T-cell (primary cell): ENCODE measurements at regions of chr7 and their contacts with region 1.

Region 1: DNA sequence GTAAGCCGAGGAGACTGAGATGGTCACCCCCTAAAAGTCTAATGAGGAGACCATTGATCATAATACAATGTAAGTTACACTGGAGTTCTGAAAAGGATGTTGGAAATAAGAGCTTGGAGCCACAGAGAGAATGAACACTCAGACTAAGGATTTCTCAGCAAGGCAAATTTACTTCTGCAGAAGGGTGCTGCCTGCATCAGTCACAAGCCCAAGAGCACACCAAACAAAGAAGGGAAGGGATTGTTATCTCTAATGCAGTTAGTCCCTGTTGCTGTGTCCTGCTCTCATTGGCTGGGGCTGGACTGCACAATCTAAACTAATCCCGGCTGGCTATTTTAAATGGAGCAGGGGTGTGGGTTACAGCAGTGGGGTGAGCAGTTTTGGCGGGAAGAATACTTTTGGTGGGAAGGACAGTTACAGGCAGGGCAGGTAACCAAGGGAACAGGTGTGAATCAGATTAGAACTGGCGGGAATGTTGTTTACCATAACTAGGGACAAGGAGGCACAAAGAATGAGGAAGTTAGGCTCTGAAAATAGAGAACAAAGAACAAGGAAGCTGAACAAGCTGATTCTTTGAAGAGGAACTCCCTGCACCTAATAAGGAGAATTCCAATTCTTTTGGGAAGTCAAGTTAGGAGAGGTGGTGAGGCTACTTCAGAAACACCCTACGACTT is 30.3 kb upstream of the TRIM24 start:
- DNase-seq: no peak
- ATAC-seq: no peak
- H3K4me3 ChIP-seq: no peak overlapping the region
- H3K4me3 Mint-ChIP-seq: no peak overlapping the region
- H3K27ac ChIP-seq: no peak overlapping the region
- H3K27ac Mint-ChIP-seq: no peak overlapping the region
- H3K4me1 ChIP-seq: no peaks in the 10 kb centered on the region
- H3K4me1 Mint-ChIP-seq: no peaks in the 10 kb centered on the region
- H3K27me3 ChIP-seq: peaks cover 0 to 3% of the 10 kb centered on the region in 2 experiments
- H3K27me3 Mint-ChIP-seq: peaks cover 0 to 12% of the 10 kb centered on the region in 2 donors

Region 2: GRCh38 chr7:138324941-138325340 is 104.8 kb before region 1 on chr7:
- CTCF ChIA-PET with region 1: no interaction called
- POLR2A ChIA-PET with region 1: no interaction called
- DNase-seq: no peak
- ATAC-seq: no peak
- H3K4me3 ChIP-seq: no peak overlapping the region
- H3K4me3 Mint-ChIP-seq: no peak overlapping the region
- H3K27ac ChIP-seq: no peak overlapping the region
- H3K27ac Mint-ChIP-seq: no peak overlapping the region
- H3K4me1 ChIP-seq: no peaks in the 10 kb centered on the region
- H3K4me1 Mint-ChIP-seq: no peaks in the 10 kb centered on the region
- H3K27me3 ChIP-seq: peaks cover 0 to 3% of the 10 kb centered on the region in 2 experiments
- H3K27me3 Mint-ChIP-seq: peaks cover 0 to 4% of the 10 kb centered on the region in 2 donors

Region 3: GRCh38 chr7:138396251-138397070 is 33.3 kb before region 1 on chr7:
- CTCF ChIA-PET with region 1: no interaction called
- POLR2A ChIA-PET with region 1: no interaction called
- DNase-seq: no peak
- ATAC-seq: no peak
- H3K4me3 ChIP-seq: no peak overlapping the region
- H3K4me3 Mint-ChIP-seq: no peak overlapping the region
- H3K27ac ChIP-seq: no peak overlapping the region
- H3K27ac Mint-ChIP-seq: no peak overlapping the region
- H3K4me1 ChIP-seq: no peaks in the 10 kb centered on the region
- H3K4me1 Mint-ChIP-seq: no peaks in the 10 kb centered on the region
- H3K27me3 ChIP-seq: no peaks in the 10 kb centered on the region
- H3K27me3 Mint-ChIP-seq: no peaks in the 10 kb centered on the region

Region 4: GRCh38 chr7:138449580-138449979 is 19.9 kb after region 1 on chr7:
- CTCF ChIA-PET with region 1: no interaction called
- POLR2A ChIA-PET with region 1: no interaction called
- DNase-seq: peak in 27 of 35 experiments; percentile 5 to 56 (median 23)
- ATAC-seq: peak in 1 of 4 experiments; percentile 55
- H3K4me3 ChIP-seq: no peak overlapping the region
- H3K4me3 Mint-ChIP-seq: no peak overlapping the region
- H3K27ac ChIP-seq: no peak overlapping the region
- H3K27ac Mint-ChIP-seq: no peak overlapping the region
- H3K4me1 ChIP-seq: no peaks in the 10 kb centered on the region
- H3K4me1 Mint-ChIP-seq: no peaks in the 10 kb centered on the region
- H3K27me3 ChIP-seq: no peaks in the 10 kb centered on the region
- H3K27me3 Mint-ChIP-seq: peaks cover 0 to 2% of the 10 kb centered on the region in 2 donors

Region 5: GRCh38 chr7:138630059-138630610 is 200.4 kb after region 1 on chr7:
- CTCF ChIA-PET with region 1: interaction called in 1 of 2 experiments, 12 read pairs
- POLR2A ChIA-PET with region 1: no interaction called
- DNase-seq: no peak
- ATAC-seq: no peak
- H3K4me3 ChIP-seq: no peak overlapping the region
- H3K4me3 Mint-ChIP-seq: no peak overlapping the region
- H3K27ac ChIP-seq: no peak overlapping the region
- H3K27ac Mint-ChIP-seq: no peak overlapping the region
- H3K4me1 ChIP-seq: peaks cover 17 to 29% of the 10 kb centered on the region in 2 experiments
- H3K4me1 Mint-ChIP-seq: peaks cover 27 to 44% (median 27%) of the 10 kb centered on the region in 3 donors
- H3K27me3 ChIP-seq: peaks cover 0 to 5% of the 10 kb centered on the region in 2 experiments
- H3K27me3 Mint-ChIP-seq: no peaks in the 10 kb centered on the region

Region 6: GRCh38 chr7:138726288-138726687 is 296.6 kb after region 1 on chr7:
- CTCF ChIA-PET with region 1: interaction called in 1 of 2 experiments, 10 read pairs
- POLR2A ChIA-PET with region 1: no interaction called
- DNase-seq: no peak
- ATAC-seq: no peak
- H3K4me3 ChIP-seq: no peak overlapping the region
- H3K4me3 Mint-ChIP-seq: no peak overlapping the region
- H3K27ac ChIP-seq: no peak overlapping the region
- H3K27ac Mint-ChIP-seq: no peak overlapping the region
- H3K4me1 ChIP-seq: no peaks in the 10 kb centered on the region
- H3K4me1 Mint-ChIP-seq: no peaks in the 10 kb centered on the region
- H3K27me3 ChIP-seq: no peaks in the 10 kb centered on the region
- H3K27me3 Mint-ChIP-seq: no peaks in the 10 kb centered on the region